GM10248 (cell line): ENCODE measurements at regions of chr17 and their contacts with region 1.

Region 1: GRCh38 chr17:45098869-45099616 is 33.3 kb downstream of the PLCD3 start:
- DNase-seq: peak; percentile 89
- CTCF ChIP-seq: peak; percentile 75

Region 2: DNA sequence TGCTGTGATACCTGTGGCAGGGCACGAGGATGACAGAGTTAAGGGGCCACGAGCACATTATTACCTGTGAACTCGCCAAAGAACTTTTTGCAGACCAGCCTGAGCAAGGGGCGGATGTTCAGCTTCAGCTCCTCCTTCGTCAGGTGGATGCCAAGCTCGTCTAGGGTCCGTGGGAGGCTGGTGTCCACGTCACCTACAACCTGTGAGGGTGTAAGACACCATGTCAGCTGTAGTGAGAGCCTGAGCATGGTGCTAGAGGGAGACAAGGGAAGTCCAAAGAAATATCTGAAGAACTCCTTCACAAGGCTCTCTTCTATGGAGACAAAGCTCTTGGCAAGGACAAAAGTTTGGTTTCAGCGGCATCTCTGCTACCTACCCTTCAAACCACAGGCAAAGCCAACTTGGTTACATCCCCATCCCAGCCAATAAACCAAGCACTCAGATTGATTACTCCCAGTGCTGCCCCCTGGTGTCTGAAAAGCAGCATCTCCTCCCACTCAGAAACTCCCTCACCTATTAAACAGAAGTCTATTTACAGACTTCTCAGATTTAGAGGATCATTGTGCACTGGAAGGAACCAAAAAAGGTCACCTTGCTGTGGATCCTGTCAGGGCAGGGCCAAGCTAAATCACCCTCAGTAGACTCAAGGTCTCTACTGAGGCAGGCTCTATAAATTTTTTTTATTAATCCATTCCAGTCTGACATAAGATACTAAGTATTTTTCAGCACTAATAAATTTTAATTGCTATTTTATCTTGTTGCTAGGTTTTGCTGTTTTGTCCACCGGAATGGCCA is 234.0 kb before region 1 on chr17:
- CTCF ChIA-PET with region 1: interaction called, 10 read pairs
- POLR2A ChIA-PET with region 1: no interaction called
- DNase-seq: peak; percentile 80
- CTCF ChIP-seq: peak; percentile 77

Region 3: GRCh38 chr17:45048795-45049563 is 50.1 kb before region 1 on chr17:
- CTCF ChIA-PET with region 1: interaction called, 13 read pairs
- POLR2A ChIA-PET with region 1: no interaction called
- DNase-seq: no peak
- CTCF ChIP-seq: no peak

Region 4: DNA sequence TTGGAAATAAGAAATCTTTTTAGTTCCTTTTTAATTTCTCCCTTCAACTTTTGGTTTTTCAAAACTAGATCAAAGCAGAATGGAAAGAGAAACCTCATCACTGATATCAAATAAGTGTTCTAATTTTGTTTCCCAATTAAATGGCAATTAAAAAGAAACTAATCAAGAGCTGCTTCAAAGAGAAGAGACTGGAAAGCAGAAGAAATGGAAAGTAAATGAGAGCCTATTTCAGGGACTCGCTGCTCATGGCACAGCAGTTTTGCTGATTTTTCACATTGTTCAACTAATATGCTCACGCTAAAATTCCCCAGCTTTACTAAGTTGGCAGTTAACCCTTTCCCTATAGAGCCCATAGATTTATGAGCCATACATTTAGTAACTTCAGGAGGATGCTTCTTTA is 31.4 kb before region 1 on chr17:
- CTCF ChIA-PET with region 1: interaction called, 12 read pairs
- POLR2A ChIA-PET with region 1: no interaction called
- DNase-seq: no peak
- CTCF ChIP-seq: no peak

Region 5: DNA sequence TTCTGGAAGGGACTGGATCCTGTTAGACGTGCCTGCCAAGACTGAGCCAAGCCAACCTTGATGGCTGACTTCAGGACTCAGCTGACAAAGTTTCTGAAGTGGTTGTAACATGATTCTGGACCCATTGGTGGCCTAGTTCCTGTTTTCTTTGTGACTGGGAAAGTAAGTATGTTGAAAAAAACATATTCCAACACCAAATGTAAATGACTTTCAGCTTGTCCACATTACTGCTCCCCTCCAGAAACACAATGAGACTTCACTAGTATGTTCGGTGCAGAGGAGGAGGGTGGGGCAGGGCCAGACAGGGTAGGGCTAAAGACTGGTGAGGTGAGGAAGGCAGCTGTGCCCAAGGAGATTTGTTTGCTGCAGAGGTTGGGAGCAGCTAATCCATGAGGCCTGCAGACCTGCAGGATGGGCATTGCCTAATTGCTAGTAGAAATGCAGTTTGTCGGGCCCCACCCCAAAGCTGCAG is 11.5 kb before region 1 on chr17:
- CTCF ChIA-PET with region 1: interaction called, 21 read pairs
- POLR2A ChIA-PET with region 1: no interaction called
- DNase-seq: no peak
- CTCF ChIP-seq: no peak